ENCODE measurements at regions of chr19 and their contacts with region 1.

Region 1: GRCh38 chr19:18281082-18282020 is at the start of gene JUND:
- DNase-seq: peak; percentile 88
- ATAC-seq: peak; percentile 64
- H3K4me3 ChIP-seq: peak within 1 kb of the TSS; percentile 98
- H3K27ac ChIP-seq: peak within 1 kb of the TSS; percentile 100
- H3K4me1 ChIP-seq: peaks cover 31% of the 10 kb centered on the region
- H3K27me3 ChIP-seq: no peaks in the 10 kb centered on the region
- CTCF ChIP-seq: peak in 1 of 3 experiments; percentile 12; a peak in 1 of 6 replicates
- EP300 ChIP-seq: peak; percentile 69 to 97; a peak in 3 of 4 replicates
- POLR2A ChIP-seq: peak; percentile 99
- RAD21 ChIP-seq: no peak
- polyA plus RNA-seq, gene JUND: 11.2 to 16.0 TPM

Region 2: DNA sequence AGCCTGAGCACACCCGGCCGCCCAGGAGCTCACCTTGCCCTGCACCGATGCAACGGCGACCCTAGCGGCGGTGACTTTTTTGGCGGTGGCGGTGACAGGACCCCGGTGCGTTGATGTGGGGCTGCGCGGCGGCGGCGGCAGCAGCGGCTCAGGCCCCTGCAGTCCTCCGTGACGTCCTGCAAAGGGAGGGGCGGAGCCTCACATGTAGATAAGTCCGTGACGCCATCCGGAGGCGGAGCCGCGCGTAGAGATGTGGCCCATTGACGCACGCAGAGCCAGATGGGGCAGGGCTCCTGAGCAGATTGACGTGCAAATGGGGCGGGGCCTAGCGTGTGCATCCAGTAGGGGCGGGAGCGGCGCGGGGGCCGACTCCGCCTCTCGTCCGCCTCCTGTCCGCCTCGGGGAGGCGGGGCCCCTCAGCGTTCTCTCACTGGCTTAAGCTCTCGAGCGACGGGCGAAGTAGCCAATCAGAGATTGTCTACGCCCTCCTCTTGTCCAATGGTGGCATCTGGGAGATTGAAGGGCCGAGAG is 77.4 kb before region 1 on chr19 and contains the start of gene RAB3A:
- CTCF ChIA-PET with region 1: interaction called, 16 read pairs
- POLR2A ChIA-PET with region 1: interaction called, 29 read pairs
- RAD21 ChIA-PET with region 1: interaction called, 31 read pairs
- SMC1A ChIA-PET with region 1: interaction called, 8 read pairs
- in situ Hi-C with region 1: no loop called
- intact Hi-C with region 1: no loop called
- DNase-seq: peak; percentile 99
- ATAC-seq: peak; percentile 97
- H3K4me3 ChIP-seq: peak within 1 kb of the TSS; percentile 86
- H3K27ac ChIP-seq: peak within 1 kb of the TSS; percentile 68
- H3K4me1 ChIP-seq: peaks cover 6% of the 10 kb centered on the region
- H3K27me3 ChIP-seq: no peaks in the 10 kb centered on the region
- CTCF ChIP-seq: no peak
- EP300 ChIP-seq: no peak
- POLR2A ChIP-seq: peak; percentile 47; the same call in 1 of the 2 replicates
- RAD21 ChIP-seq: no peak
- polyA plus RNA-seq, gene RAB3A: 0.07 TPM in 1 of 2 experiments, not detected in the other

Region 3: GRCh38 chr19:18291590-18292461 is 10.5 kb after region 1 on chr19:
- CTCF ChIA-PET with region 1: interaction called, 81 read pairs
- POLR2A ChIA-PET with region 1: interaction called, 172 read pairs
- RAD21 ChIA-PET with region 1: interaction called, 136 read pairs
- SMC1A ChIA-PET with region 1: interaction called, 58 read pairs
- in situ Hi-C with region 1: no loop called
- intact Hi-C with region 1: loop called (anchors 1 kb)
- DNase-seq: no peak
- ATAC-seq: peak; percentile 69
- H3K4me3 ChIP-seq: peak overlapping the region; percentile 96
- H3K27ac ChIP-seq: peak overlapping the region; percentile 96
- H3K4me1 ChIP-seq: peaks cover 32% of the 10 kb centered on the region
- H3K27me3 ChIP-seq: no peaks in the 10 kb centered on the region; a peak in 1 of 4 replicates
- CTCF ChIP-seq: no peak
- EP300 ChIP-seq: peak; percentile 75 to 83; a peak in 3 of 4 replicates
- POLR2A ChIP-seq: peak; percentile 72
- RAD21 ChIP-seq: no peak; the same call in 1 of the 2 replicates

Region 4: GRCh38 chr19:18328340-18329034 is 47.1 kb after region 1 on chr19:
- CTCF ChIA-PET with region 1: interaction called, 516 read pairs
- POLR2A ChIA-PET with region 1: interaction called, 206 read pairs
- RAD21 ChIA-PET with region 1: interaction called, 259 read pairs
- SMC1A ChIA-PET with region 1: interaction called, 176 read pairs
- in situ Hi-C with region 1: loop called (anchors 5 kb)
- intact Hi-C with region 1: loop called (anchors 1 kb)
- DNase-seq: peak; percentile 91
- ATAC-seq: peak; percentile 100
- H3K4me3 ChIP-seq: peak overlapping the region; percentile 64
- H3K27ac ChIP-seq: peak overlapping the region; percentile 27
- H3K4me1 ChIP-seq: peaks cover 4% of the 10 kb centered on the region
- H3K27me3 ChIP-seq: no peaks in the 10 kb centered on the region
- CTCF ChIP-seq: peak; percentile 89 to 98 (median 95)
- EP300 ChIP-seq: no peak
- POLR2A ChIP-seq: no peak
- RAD21 ChIP-seq: peak; percentile 91

Region 5: DNA sequence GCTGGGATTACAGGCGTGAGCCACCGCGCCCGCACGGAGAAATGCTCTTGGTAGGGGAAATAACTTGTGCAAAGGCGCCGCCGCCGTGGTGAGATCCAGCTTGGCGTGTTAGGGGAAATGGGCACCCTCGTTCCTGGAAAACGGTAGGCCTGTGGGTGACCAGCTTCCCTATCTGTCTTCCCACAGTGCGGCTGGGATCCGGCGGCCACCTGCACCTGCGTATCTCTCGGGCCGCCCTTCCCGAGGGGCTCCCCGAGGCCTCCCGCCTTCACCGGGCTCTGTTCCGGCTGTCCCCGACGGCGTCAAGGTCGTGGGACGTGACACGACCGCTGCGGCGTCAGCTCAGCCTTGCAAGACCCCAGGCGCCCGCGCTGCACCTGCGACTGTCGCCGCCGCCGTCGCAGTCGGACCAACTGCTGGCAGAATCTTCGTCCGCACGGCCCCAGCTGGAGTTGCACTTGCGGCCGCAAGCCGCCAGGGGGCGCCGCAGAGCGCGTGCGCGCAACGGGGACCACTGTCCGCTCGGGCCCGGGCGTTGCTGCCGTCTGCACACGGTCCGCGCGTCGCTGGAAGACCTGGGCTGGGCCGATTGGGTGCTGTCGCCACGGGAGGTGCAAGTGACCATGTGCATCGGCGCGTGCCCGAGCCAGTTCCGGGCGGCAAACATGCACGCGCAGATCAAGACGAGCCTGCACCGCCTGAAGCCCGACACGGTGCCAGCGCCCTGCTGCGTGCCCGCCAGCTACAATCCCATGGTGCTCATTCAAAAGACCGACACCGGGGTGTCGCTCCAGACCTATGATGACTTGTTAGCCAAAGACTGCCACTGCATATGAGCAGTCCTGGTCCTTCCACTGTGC is 107.0 kb after region 1 on chr19:
- CTCF ChIA-PET with region 1: interaction called, 49 read pairs
- POLR2A ChIA-PET with region 1: interaction called, 4 read pairs
- RAD21 ChIA-PET with region 1: interaction called, 5 read pairs
- SMC1A ChIA-PET with region 1: interaction called, 4 read pairs
- in situ Hi-C with region 1: no loop called
- intact Hi-C with region 1: no loop called
- DNase-seq: peak; percentile 60
- ATAC-seq: peak; percentile 94
- H3K4me3 ChIP-seq: peak overlapping the region; percentile 50; the same call in 1 of the 2 replicates
- H3K27ac ChIP-seq: no peak overlapping the region
- H3K4me1 ChIP-seq: peaks cover 16% of the 10 kb centered on the region
- H3K27me3 ChIP-seq: peaks cover 0 to 3% of the 10 kb centered on the region in 2 experiments; a peak in 3 of 4 replicates
- CTCF ChIP-seq: peak; percentile 98; a peak in 5 of 6 replicates
- EP300 ChIP-seq: no peak
- POLR2A ChIP-seq: peak; percentile 73
- RAD21 ChIP-seq: peak; percentile 72

Region 6: GRCh38 chr19:18419195-18419698 is 137.9 kb after region 1 on chr19 and contains the start of gene SSBP4:
- CTCF ChIA-PET with region 1: interaction called, 88 read pairs
- POLR2A ChIA-PET with region 1: interaction called, 26 read pairs
- RAD21 ChIA-PET with region 1: interaction called, 12 read pairs
- SMC1A ChIA-PET with region 1: interaction called, 6 read pairs
- in situ Hi-C with region 1: no loop called
- intact Hi-C with region 1: no loop called
- DNase-seq: no peak
- ATAC-seq: peak; percentile 37
- H3K4me3 ChIP-seq: peak within 1 kb of the TSS; percentile 87
- H3K27ac ChIP-seq: peak within 1 kb of the TSS; percentile 72
- H3K4me1 ChIP-seq: peaks cover 70% of the 10 kb centered on the region
- H3K27me3 ChIP-seq: no peaks in the 10 kb centered on the region
- CTCF ChIP-seq: peak in 2 of 3 experiments; percentile 14 to 34; a peak in 2 of 6 replicates
- EP300 ChIP-seq: peak in 1 of 2 experiments; percentile 36; a peak in 1 of 4 replicates
- POLR2A ChIP-seq: no peak
- RAD21 ChIP-seq: no peak
- polyA plus RNA-seq, gene SSBP4: 0.37 to 6.6 TPM

Measured in GM12878 (cell line).